Activated CD4-positive, alpha-beta T cell treated with anti-CD3 and anti-CD28 coated beads, Interleukin-2, amount 10 ng/mL, durations not matched to agents 24 days and 14 days (primary cell): ENCODE measurements at regions of chr2 and their contacts with region 1.

Region 1: DNA sequence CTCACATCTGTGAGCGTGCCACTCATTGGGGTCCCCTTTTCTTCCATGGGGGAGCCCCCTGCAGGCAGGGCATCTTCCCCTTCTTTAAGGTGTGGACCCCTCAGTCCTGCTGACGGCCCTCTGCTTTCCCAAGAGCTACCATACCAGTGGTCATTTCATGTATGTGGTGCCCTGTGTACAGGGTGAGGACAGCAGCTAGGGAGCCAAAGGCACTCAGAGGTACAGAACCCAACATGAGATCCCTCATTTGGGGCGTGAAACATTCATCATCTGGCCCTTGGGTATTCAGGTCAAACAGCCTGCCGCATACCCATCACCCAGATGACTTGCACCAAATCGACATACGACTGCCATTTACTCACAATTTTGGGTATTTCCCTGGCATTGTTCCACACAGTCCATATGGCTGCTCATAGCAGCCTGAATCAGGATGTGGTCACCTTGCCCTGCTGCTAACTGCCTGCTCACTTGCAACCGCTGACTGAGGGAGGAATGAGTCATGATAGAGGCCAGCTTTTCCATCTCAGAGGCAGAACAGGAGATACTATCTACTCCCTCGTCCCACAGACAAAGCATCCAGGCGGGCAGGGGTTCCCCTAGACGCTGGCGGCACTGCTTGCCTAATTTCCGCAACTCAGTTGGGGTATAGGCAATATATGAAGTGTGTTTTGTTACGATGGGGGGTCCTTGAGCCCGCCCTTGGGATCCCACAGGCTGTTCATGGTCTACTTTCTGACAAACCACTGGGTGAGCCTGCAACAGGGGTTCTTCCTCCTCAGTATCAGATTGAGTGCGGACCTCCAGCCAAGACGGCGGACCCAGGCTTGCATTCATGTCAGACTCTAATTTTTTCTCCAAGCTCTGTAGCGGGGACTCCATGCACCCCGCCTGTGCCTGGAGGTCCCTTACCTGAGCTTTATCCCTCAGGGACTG is 228.6 kb downstream of the SATB2 start:
- DNase-seq: peak; percentile 67
- H3K4me3 Mint-ChIP-seq: no peak overlapping the region
- H3K27ac Mint-ChIP-seq: no peak overlapping the region
- H3K4me1 Mint-ChIP-seq: no peaks in the 10 kb centered on the region
- H3K27me3 Mint-ChIP-seq: peaks cover 2% of the 10 kb centered on the region

Region 2: DNA sequence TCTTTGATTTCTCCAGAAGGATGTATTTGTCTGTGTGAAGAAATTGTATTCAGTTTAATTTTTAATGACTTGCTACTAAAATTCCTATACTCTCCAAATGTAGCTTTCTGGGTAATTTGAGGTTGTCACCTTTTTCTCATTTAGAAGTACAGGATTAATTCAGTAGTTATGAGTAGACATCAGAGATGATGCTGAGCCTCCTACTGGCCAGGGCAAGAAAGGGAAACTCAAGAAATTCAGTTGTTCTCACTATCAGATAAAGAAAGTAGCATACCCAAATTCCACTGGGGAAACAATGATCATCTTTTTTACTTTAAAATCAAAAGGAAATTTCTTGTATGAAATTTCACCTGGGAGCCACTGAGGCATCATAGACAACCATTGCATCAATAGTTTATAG is 29.1 kb after region 1 on chr2:
- intact Hi-C with region 1: loop called (anchors 1 kb)
- DNase-seq: no peak
- H3K4me3 Mint-ChIP-seq: no peak overlapping the region
- H3K27ac Mint-ChIP-seq: no peak overlapping the region
- H3K4me1 Mint-ChIP-seq: no peaks in the 10 kb centered on the region
- H3K27me3 Mint-ChIP-seq: no peaks in the 10 kb centered on the region